Vagina (tissue), 2 donors: ENCODE measurements at regions of chr14 and their contacts with region 1.

Region 1: GRCh38 chr14:39939023-39939422 is 506.8 kb upstream of the FBXO33 start:
- DNase-seq: no peak
- H3K4me3 ChIP-seq: no peak overlapping the region
- H3K27ac ChIP-seq: no peak overlapping the region
- H3K4me1 ChIP-seq: no peaks in the 10 kb centered on the region
- H3K27me3 ChIP-seq: no peaks in the 10 kb centered on the region
- CTCF ChIP-seq: no peak
- POLR2A ChIP-seq: no peak

Region 2: DNA sequence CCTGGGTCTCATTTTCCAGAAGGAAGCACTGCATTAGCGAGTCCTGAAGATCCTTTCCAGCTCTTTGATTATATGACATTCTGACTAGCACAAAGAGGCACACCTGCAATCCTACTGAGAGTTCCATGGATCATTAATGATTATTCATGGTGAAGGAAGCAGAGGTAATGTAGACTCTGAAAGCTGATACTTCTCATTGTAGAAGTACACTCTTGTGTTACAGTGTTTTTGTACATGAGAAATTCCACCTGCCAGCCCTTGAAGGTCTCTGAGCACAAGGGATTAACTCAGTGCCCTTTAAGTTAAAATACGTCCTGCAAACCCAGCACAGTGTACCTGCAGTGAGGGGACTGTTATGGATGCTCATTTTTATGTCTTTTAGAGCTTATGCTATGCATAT is 52.0 kb after region 1 on chr14:
- intact Hi-C with region 1: no loop called
- DNase-seq: no peak
- H3K4me3 ChIP-seq: no peak overlapping the region
- H3K27ac ChIP-seq: no peak overlapping the region
- H3K4me1 ChIP-seq: no peaks in the 10 kb centered on the region
- H3K27me3 ChIP-seq: no peaks in the 10 kb centered on the region
- CTCF ChIP-seq: no peak
- POLR2A ChIP-seq: no peak

Region 3: GRCh38 chr14:40074195-40074594 is 135.2 kb after region 1 on chr14:
- intact Hi-C with region 1: loop called (anchors 5 kb)
- DNase-seq: no peak
- H3K4me3 ChIP-seq: no peak overlapping the region
- H3K27ac ChIP-seq: no peak overlapping the region
- H3K4me1 ChIP-seq: no peaks in the 10 kb centered on the region
- H3K27me3 ChIP-seq: no peaks in the 10 kb centered on the region
- CTCF ChIP-seq: no peak
- POLR2A ChIP-seq: no peak

Region 4: GRCh38 chr14:40119321-40119720 is 180.3 kb after region 1 on chr14:
- intact Hi-C with region 1: no loop called
- DNase-seq: no peak
- H3K4me3 ChIP-seq: no peak overlapping the region
- H3K27ac ChIP-seq: no peak overlapping the region
- H3K4me1 ChIP-seq: no peaks in the 10 kb centered on the region
- H3K27me3 ChIP-seq: no peaks in the 10 kb centered on the region
- CTCF ChIP-seq: no peak
- POLR2A ChIP-seq: no peak